CD8-positive, alpha-beta T cell (primary cell): ENCODE measurements at regions of chr10 and their contacts with region 1.

Region 1: GRCh38 chr10:71771821-71772617 is 1.3 kb downstream of the VSIR start:
- DNase-seq: peak in 2 of 9 experiments; percentile 30 to 50
- ATAC-seq: no peak
- H3K4me3 ChIP-seq: peak overlapping the region; percentile 88 to 100
- H3K4me3 Mint-ChIP-seq: peak overlapping the region; percentile 95
- H3K27ac ChIP-seq: peak overlapping the region; percentile 80 to 89
- H3K27ac Mint-ChIP-seq: peak overlapping the region; percentile 92
- H3K4me1 ChIP-seq: peaks cover 73% of the 10 kb centered on the region
- H3K4me1 Mint-ChIP-seq: peaks cover 81% of the 10 kb centered on the region
- H3K27me3 ChIP-seq: no peaks in the 10 kb centered on the region
- H3K27me3 Mint-ChIP-seq: no peaks in the 10 kb centered on the region
- CTCF ChIP-seq: no peak

Region 2: DNA sequence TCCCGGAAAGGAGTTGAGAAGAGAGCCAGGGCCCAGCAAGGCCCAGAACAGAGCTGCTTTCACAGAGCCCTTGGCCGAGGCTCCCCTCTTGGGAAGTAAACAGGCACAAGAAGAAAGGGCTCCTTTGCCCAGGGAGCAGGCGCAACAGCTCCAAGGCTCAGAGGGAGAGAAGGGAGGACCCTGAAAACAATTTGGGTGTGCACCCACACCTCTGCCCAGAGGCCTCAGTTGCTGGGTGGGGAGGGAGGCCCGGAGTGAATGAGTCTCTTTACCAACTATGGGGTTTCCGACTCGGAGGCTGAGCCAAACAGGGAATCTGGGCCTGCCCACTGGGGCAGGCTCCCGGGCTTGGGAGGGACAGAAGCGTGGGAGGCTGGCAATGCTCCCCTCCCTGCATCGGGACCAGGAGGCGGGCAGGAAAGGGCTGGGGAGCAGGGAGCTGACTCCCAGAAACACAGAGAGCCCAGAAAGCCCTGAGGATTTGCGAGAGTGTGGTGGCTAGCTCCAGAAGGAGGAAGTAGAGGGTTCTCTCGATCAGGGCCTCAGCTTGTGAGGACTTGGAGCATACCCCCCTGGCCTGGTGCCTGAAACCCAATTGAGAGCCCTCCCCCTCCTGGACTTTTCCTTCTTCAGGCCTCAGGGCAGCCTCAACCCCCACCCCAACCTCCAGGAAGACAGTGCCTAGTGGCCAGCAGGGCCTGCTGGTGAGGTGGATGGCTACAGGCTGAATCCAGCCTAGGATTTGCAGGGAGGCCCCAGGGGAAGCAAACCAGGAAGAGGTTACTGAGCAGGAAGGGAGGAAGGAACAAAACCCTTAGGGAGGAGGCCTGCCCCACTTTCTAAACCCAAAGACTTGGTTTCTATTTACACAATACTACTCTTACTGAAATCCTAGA is 58.6 kb before region 1 on chr10:
- CTCF ChIA-PET with region 1: interaction called, 242 read pairs
- POLR2A ChIA-PET with region 1: interaction called, 25 read pairs
- intact Hi-C with region 1: loop called (anchors 1 to 5 kb)
- DNase-seq: peak in 5 of 9 experiments; percentile 20 to 76 (median 39)
- ATAC-seq: peak; percentile 57
- H3K4me3 ChIP-seq: peak overlapping the region; percentile 21 to 24
- H3K4me3 Mint-ChIP-seq: peak overlapping the region; percentile 81
- H3K27ac ChIP-seq: peak overlapping the region; percentile 77 to 92
- H3K27ac Mint-ChIP-seq: peak overlapping the region; percentile 98
- H3K4me1 ChIP-seq: peaks cover 67% of the 10 kb centered on the region
- H3K4me1 Mint-ChIP-seq: peaks cover 72% of the 10 kb centered on the region
- H3K27me3 ChIP-seq: no peaks in the 10 kb centered on the region
- H3K27me3 Mint-ChIP-seq: no peaks in the 10 kb centered on the region
- CTCF ChIP-seq: no peak

Region 3: DNA sequence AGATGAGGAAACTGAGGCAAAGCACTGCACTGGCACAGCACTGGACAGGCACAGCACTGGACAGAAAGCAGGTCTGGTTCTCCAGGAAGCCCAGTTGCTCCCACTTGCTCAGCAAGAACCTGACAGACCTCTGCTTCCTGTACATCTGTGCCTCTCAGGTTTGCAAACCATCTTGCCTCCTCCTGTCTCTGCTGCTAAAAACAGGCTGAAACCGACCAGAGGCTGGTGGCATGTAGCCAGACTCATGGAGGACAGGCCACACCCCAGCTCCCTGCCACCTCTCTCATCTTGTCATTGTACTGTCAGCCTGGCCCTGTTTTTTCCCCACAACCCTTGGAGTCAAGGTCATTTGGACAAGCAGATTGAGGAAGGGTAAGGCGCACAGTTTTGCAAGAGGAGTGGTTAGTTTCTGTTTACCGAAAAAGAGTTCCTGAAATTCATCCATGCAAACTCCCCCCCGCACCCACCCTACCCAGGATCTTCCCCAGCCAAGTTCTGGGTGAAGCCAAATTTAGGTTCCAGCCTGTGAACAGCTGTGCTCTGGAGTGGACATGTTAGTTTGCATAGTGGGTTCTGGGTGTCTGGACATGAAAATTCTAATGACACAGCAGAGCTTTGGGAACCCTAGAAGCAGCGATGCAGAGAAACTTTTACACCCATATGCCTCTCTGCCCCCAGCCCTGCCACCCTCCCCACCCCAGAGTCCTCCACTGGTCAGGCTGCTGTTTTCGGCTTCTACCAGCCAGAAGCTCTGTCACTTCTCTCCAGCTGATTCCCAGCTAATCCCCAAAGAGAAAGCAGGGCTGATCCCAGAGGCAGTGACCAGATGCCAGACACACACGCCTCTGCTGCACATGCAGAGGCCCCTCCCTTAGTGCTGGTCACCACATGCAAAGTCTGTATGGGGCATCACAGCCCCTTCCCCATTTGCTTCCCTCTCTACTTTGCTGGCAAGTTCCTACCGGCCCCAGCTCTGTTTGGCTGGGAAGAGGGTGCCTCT is 44.0 kb before region 1 on chr10:
- CTCF ChIA-PET with region 1: interaction called, 207 read pairs
- POLR2A ChIA-PET with region 1: interaction called, 162 read pairs
- intact Hi-C with region 1: loop called (anchors 1 kb)
- DNase-seq: peak; percentile 58 to 93 (median 78)
- ATAC-seq: peak; percentile 60
- H3K4me3 ChIP-seq: peak overlapping the region; percentile 16 to 18
- H3K4me3 Mint-ChIP-seq: peak overlapping the region; percentile 58
- H3K27ac ChIP-seq: peak overlapping the region; percentile 75 to 86
- H3K27ac Mint-ChIP-seq: peak overlapping the region; percentile 98
- H3K4me1 ChIP-seq: peaks cover 93% of the 10 kb centered on the region
- H3K4me1 Mint-ChIP-seq: peaks cover 86% of the 10 kb centered on the region
- H3K27me3 ChIP-seq: no peaks in the 10 kb centered on the region
- H3K27me3 Mint-ChIP-seq: no peaks in the 10 kb centered on the region
- CTCF ChIP-seq: no peak

Region 4: DNA sequence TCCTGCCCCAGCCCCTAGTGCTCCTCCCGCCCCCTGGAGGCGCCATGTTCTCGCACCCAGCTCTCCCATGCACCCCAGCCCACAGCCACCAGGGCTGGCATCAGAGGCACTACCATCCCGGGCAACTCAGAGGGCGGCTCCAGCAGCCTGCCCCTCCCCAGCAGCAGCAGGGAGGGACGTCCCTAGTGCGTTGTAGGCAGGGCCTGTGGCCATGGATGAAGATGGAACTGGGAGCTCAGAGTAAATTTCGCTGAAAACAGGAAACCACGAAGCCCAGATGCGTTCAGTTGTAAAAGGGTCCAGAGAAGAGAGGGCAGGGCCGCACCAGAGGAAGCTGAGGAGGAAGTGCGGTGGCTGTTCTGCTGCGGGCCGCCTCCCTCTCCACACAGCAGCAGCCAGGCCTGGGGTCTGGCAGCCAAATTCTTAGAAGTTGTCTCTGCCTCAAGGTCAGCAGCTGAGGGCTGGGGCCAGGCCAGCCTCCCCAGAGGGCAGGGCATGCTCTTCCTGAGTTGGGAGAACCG is 23.3 kb before region 1 on chr10:
- CTCF ChIA-PET with region 1: interaction called, 114 read pairs
- POLR2A ChIA-PET with region 1: interaction called, 300 read pairs
- intact Hi-C with region 1: loop called (anchors 1 to 2 kb)
- DNase-seq: peak; percentile 57 to 93 (median 78)
- ATAC-seq: peak; percentile 88
- H3K4me3 ChIP-seq: peak overlapping the region in 1 of 2 experiments; percentile 27
- H3K4me3 Mint-ChIP-seq: peak overlapping the region; percentile 74
- H3K27ac ChIP-seq: peak overlapping the region; percentile 57 to 82
- H3K27ac Mint-ChIP-seq: peak overlapping the region; percentile 93
- H3K4me1 ChIP-seq: peaks cover 100% of the 10 kb centered on the region
- H3K4me1 Mint-ChIP-seq: peaks cover 96% of the 10 kb centered on the region
- H3K27me3 ChIP-seq: no peaks in the 10 kb centered on the region
- H3K27me3 Mint-ChIP-seq: no peaks in the 10 kb centered on the region
- CTCF ChIP-seq: no peak

Region 5: GRCh38 chr10:71812016-71812912 is 40.2 kb after region 1 on chr10:
- CTCF ChIA-PET with region 1: interaction called, 38 read pairs
- POLR2A ChIA-PET with region 1: no interaction called
- intact Hi-C with region 1: no loop called
- DNase-seq: peak; percentile 63 to 91 (median 79)
- ATAC-seq: peak; percentile 91
- H3K4me3 ChIP-seq: no peak overlapping the region
- H3K4me3 Mint-ChIP-seq: no peak overlapping the region
- H3K27ac ChIP-seq: no peak overlapping the region
- H3K27ac Mint-ChIP-seq: no peak overlapping the region
- H3K4me1 ChIP-seq: peaks cover 4% of the 10 kb centered on the region
- H3K4me1 Mint-ChIP-seq: peaks cover 2% of the 10 kb centered on the region
- H3K27me3 ChIP-seq: no peaks in the 10 kb centered on the region
- H3K27me3 Mint-ChIP-seq: no peaks in the 10 kb centered on the region
- CTCF ChIP-seq: peak; percentile 79

Region 6: GRCh38 chr10:71850637-71851464 is 78.8 kb after region 1 on chr10 and contains the start of gene PSAP:
- CTCF ChIA-PET with region 1: interaction called, 4 read pairs
- POLR2A ChIA-PET with region 1: interaction called, 7 read pairs
- intact Hi-C with region 1: loop called (anchors 2 to 5 kb)
- DNase-seq: peak; percentile 96 to 99 (median 99)
- ATAC-seq: peak; percentile 97
- H3K4me3 ChIP-seq: peak within 1 kb of the TSS; percentile 87 to 94
- H3K4me3 Mint-ChIP-seq: peak within 1 kb of the TSS; percentile 94
- H3K27ac ChIP-seq: peak within 1 kb of the TSS; percentile 78 to 79
- H3K27ac Mint-ChIP-seq: peak within 1 kb of the TSS; percentile 94
- H3K4me1 ChIP-seq: peaks cover 26% of the 10 kb centered on the region
- H3K4me1 Mint-ChIP-seq: peaks cover 49% of the 10 kb centered on the region
- H3K27me3 ChIP-seq: no peaks in the 10 kb centered on the region
- H3K27me3 Mint-ChIP-seq: no peaks in the 10 kb centered on the region
- CTCF ChIP-seq: no peak
- total RNA-seq, gene PSAP: 156 to 161 TPM